ENCODE measurements at regions of chr10 and their contacts with region 1.

Region 1: DNA sequence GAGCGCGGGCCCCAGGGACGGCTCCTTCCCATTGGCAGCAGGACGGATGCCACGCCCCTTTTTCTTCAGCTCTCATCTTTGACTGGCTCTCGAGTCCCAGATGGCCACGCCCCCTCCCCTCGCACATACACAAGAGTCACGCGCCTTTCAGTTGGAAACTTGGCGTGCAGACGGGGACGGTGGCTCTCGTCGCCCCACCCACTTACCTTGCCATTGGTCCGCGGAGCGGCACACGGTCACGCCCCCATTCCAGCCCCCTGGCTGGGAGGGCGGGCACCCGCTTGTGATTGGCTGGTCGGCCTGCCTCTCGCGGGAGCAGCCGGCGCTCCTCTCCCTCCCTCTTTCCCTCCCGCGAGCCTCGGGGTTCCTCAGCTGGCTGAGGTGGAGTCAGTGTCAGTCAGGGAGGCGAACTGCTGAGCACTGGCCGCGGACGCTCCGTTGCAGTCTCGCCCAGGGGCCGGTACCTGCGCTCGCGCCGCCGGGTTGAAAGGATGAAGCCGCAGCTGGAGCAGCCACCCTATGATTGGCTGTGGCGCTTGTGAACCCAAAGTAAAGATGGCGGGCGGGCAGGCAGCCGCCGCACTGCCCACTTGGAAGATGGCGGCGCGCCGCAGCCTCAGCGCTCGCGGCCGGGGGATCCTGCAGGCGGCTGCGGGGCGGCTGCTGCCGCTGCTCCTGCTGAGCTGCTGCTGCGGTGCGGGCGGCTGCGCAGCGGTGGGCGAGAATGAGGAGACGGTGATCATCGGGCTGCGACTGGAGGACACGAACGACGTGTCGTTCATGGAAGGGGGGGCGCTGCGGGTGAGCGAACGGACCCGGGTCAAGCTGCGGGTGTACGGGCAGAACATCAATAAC is at the start of gene CNNM2:
- DNase-seq: peak; percentile 99 to 100
- H3K4me3 ChIP-seq: peak within 1 kb of the TSS; percentile 74 to 96 (median 95)
- H3K27ac ChIP-seq: peak within 1 kb of the TSS; percentile 91
- H3K4me1 ChIP-seq: peaks cover 0 to 19% of the 10 kb centered on the region in 2 donors
- H3K27me3 ChIP-seq: no peaks in the 10 kb centered on the region
- CTCF ChIP-seq: no peak
- POLR2A ChIP-seq: peak; percentile 16
- total RNA-seq, gene CNNM2: 6.4 to 7.2 (median 6.7) TPM

Region 2: DNA sequence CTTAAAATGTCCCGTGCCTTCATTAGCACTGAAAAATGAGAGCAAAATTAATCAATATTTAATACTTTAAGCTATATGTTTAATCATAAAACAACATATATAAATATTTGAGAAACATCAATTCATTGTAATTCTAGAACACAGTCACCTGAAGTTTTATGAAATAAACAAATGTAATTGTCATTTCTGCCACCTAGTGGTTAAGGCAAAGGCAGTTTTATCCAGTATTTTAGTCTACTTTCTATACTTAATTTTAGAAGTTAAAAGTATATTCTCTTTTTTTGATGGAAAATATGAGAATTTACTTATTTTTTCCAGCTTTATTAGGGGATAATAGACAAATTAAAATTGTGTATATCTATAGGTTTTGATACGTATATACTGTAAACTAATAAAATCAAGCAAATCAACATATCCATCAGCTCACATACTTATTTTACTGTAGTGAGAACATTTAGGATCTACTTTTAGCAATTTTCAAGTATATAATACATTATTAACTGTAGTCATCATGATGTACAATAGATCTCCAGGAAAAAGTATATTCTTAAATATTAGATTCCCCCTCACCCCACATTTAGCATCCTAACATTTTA is 415.8 kb after region 1 on chr10:
- intact Hi-C with region 1: loop called (anchors 10 kb)
- DNase-seq: no peak
- H3K4me3 ChIP-seq: no peak overlapping the region
- H3K27ac ChIP-seq: no peak overlapping the region
- H3K4me1 ChIP-seq: no peaks in the 10 kb centered on the region
- H3K27me3 ChIP-seq: no peaks in the 10 kb centered on the region
- CTCF ChIP-seq: peak in 2 of 3 donors; percentile 30 to 41
- POLR2A ChIP-seq: no peak

Measured in breast epithelium (tissue), 4 donors.